ENCODE measurements at regions of chr11 and their contacts with region 1.

Region 1: GRCh38 chr11:97201743-97202612 is 812.2 kb downstream of the JRKL start:
- DNase-seq: no peak

Region 2: GRCh38 chr11:96741068-96741467 is 460.9 kb before region 1 on chr11:
- intact Hi-C with region 1: no loop called
- DNase-seq: no peak

Region 3: GRCh38 chr11:97123237-97123636 is 78.7 kb before region 1 on chr11:
- intact Hi-C with region 1: loop called in 1 of 2 experiments (anchors 2 kb)
- DNase-seq: no peak

Region 4: GRCh38 chr11:97269527-97269926 is 67.5 kb after region 1 on chr11:
- intact Hi-C with region 1: no loop called
- DNase-seq: no peak

Region 5: GRCh38 chr11:97751405-97751804 is 549.4 kb after region 1 on chr11:
- intact Hi-C with region 1: no loop called
- DNase-seq: no peak

Measured in posterior vena cava (tissue), 2 donors.